OCI-LY7 (cell line): ENCODE measurements at regions of chr12 and their contacts with region 1.

Region 1: GRCh38 chr12:67648521-67649260 is at the start of gene DYRK2:
- DNase-seq: peak; percentile 89
- H3K4me3 ChIP-seq: peak within 1 kb of the TSS; percentile 98
- H3K27ac ChIP-seq: peak within 1 kb of the TSS; percentile 64
- H3K4me1 ChIP-seq: peaks cover 25% of the 10 kb centered on the region
- CTCF ChIP-seq: 0 out of 2 replicates have a peak, but pooled peaks have one; percentile 26
- total RNA-seq, gene DYRK2: 25.3 and 30.6 TPM in 2 replicates

Region 2: GRCh38 chr12:67268896-67269631 is 379.6 kb before region 1 on chr12 and contains the start of gene CAND1:
- CTCF ChIA-PET with region 1: no interaction called
- POLR2A ChIA-PET with region 1: no interaction called
- intact Hi-C with region 1: loop called (anchors 2 kb)
- DNase-seq: peak; percentile 99
- H3K4me3 ChIP-seq: peak within 1 kb of the TSS; percentile 93
- H3K27ac ChIP-seq: peak within 1 kb of the TSS; percentile 87
- H3K4me1 ChIP-seq: peaks cover 33% of the 10 kb centered on the region
- CTCF ChIP-seq: 0 out of 2 replicates have a peak, but pooled peaks have one; percentile 12
- total RNA-seq, gene CAND1: 104 and 109 TPM in 2 replicates

Region 3: DNA sequence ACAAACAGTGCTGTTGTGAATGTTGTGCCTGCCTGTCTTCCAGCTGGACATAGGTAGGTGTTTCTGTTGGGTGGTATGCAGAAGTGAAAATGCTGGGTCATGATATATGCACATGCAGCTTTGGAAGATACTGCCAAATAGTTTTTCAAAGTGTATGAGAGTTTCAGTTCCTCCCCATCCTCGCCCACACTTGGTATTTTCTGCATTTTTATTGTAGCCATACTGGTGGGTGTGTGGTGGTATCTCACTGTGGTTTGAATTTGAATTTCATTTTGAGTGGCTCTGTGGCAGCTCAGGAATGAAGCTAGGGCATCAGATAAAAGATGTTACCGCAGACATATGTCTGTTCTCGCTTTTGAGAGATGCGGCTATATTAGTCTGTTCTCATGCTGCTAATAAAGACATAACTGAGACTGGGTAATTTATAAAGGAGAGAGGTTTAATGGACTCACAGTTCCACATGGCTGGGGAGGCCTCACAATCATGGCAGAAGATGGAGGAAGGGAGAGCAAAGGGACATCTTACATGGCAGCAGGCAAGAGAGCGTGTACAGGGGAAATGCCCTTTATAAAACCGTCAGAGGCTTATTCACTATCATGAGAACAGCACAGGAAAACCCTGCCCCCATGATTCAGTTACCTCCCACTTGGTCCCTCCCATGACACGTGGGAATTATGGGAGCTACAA is 196.4 kb before region 1 on chr12:
- CTCF ChIA-PET with region 1: no interaction called
- POLR2A ChIA-PET with region 1: no interaction called
- intact Hi-C with region 1: loop called (anchors 5 kb)
- DNase-seq: peak; percentile 79
- H3K4me3 ChIP-seq: no peak overlapping the region
- H3K27ac ChIP-seq: peak overlapping the region; percentile 14
- H3K4me1 ChIP-seq: peaks cover 24% of the 10 kb centered on the region
- CTCF ChIP-seq: no peak

Region 4: DNA sequence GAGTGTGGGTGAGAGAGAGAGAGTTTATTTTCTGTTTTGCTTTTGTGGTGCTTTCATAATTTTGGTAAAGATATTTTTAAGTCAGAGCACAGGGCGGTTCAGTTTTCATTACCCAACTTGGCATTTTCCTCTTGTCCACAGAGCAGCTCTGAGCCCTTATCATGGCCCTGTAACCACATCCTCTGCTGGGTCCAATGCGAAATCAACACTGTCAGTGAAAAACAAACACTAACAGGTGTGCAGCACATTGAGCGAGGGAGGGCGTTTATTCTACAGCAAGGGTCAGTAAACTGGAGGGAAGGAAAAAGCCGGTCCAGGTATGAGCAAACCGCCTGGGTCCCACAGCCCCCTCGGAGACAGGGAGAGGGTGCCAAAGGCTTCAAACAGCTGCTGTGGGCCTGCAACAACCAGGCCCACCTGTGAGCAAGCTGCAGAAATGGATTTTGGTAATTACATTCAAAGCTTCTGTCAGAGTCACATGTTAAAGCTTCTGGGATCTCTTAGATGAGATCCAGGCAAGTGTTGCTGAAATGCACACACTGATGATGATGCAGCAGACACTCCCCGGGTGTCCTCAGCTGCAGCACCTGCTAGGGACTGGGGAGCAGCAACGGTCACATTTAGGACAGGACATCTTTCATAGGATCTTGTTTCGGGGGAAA is 132.9 kb before region 1 on chr12:
- CTCF ChIA-PET with region 1: no interaction called
- POLR2A ChIA-PET with region 1: no interaction called
- intact Hi-C with region 1: no loop called
- DNase-seq: peak; percentile 80
- H3K4me3 ChIP-seq: peak overlapping the region; percentile 2
- H3K27ac ChIP-seq: peak overlapping the region; percentile 50
- H3K4me1 ChIP-seq: peaks cover 18% of the 10 kb centered on the region
- CTCF ChIP-seq: no peak

Region 5: GRCh38 chr12:67698672-67699581 is 50.2 kb after region 1 on chr12:
- CTCF ChIA-PET with region 1: no interaction called
- POLR2A ChIA-PET with region 1: no interaction called
- intact Hi-C with region 1: loop called (anchors 1 kb)
- DNase-seq: peak; percentile 88
- H3K4me3 ChIP-seq: peak overlapping the region; percentile 59
- H3K27ac ChIP-seq: peak overlapping the region; percentile 83
- H3K4me1 ChIP-seq: peaks cover 72% of the 10 kb centered on the region
- CTCF ChIP-seq: no peak

Region 6: GRCh38 chr12:67758119-67758518 is 109.4 kb after region 1 on chr12:
- CTCF ChIA-PET with region 1: no interaction called
- POLR2A ChIA-PET with region 1: no interaction called
- intact Hi-C with region 1: loop called (anchors 1 kb)
- DNase-seq: peak; percentile 93
- H3K4me3 ChIP-seq: peak overlapping the region; percentile 13
- H3K27ac ChIP-seq: peak overlapping the region; percentile 78
- H3K4me1 ChIP-seq: peaks cover 65% of the 10 kb centered on the region
- CTCF ChIP-seq: 0 out of 2 replicates have a peak, but pooled peaks have one; percentile 26

Region 7: GRCh38 chr12:67943226-67943892 is 294.7 kb after region 1 on chr12:
- CTCF ChIA-PET with region 1: no interaction called
- POLR2A ChIA-PET with region 1: interaction called, 3 read pairs
- intact Hi-C with region 1: loop called (anchors 1 kb)
- DNase-seq: peak; percentile 83
- H3K4me3 ChIP-seq: no peak overlapping the region
- H3K27ac ChIP-seq: no peak overlapping the region
- H3K4me1 ChIP-seq: peaks cover 5% of the 10 kb centered on the region
- CTCF ChIP-seq: peak; percentile 95